Activated B cell treated with CpG ODN at 0.5 μM for 24 hours (primary cell): ENCODE measurements at regions of chr15 and their contacts with region 1.

Region 1: GRCh38 chr15:76336254-76337058 is at the start of gene ISL2:
- DNase-seq: peak; percentile 45
- ATAC-seq: peak; percentile 43
- H3K4me3 Mint-ChIP-seq: peak within 1 kb of the TSS; percentile 82
- H3K27ac Mint-ChIP-seq: peak within 1 kb of the TSS; percentile 60
- H3K4me1 Mint-ChIP-seq: peaks cover 57% of the 10 kb centered on the region
- H3K27me3 Mint-ChIP-seq: peaks cover 56% of the 10 kb centered on the region
- CTCF ChIP-seq: no peak
- total RNA-seq, gene ISL2: 0.35 and 0.39 TPM in 2 replicates

Region 2: DNA sequence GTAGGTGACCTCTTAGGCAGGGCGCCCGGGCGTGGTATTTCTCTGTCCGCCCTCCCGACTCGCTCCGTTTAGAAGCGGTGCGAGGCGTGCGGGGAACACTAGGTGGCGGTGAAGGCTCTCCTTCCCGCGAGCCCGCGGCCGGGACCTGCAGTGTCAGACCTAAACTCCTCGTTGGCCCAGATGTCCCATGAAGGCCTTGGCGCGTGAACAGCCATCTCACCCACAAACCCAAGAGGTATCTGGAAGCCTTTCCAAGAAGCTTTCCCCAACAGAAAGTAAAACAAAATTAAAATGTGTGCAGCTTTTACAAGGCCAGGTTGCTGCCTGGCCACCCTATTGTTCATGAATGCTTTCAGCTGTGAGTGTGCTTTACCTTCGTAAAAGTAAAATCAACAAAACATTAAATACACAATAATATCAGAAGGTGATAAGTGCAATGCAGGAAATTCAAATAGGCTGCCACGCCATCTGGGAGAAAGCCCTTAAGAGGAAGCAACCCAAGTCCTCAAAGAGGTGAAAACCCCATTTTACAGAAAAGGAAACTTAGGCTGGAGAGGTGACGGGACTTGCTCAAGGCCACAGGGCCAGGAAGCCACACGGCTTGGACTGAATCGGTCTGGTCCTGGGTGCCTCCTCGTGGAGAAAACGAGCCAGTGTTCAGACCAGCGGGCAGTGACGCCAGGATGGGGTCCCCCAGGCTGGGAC is 145.5 kb before region 1 on chr15:
- CTCF ChIA-PET with region 1: no interaction called
- POLR2A ChIA-PET with region 1: no interaction called
- intact Hi-C with region 1: loop called (anchors 2 kb)
- DNase-seq: peak; percentile 64
- ATAC-seq: peak; percentile 95
- H3K4me3 Mint-ChIP-seq: peak overlapping the region; percentile 75
- H3K27ac Mint-ChIP-seq: no peak overlapping the region
- H3K4me1 Mint-ChIP-seq: peaks cover 16% of the 10 kb centered on the region
- H3K27me3 Mint-ChIP-seq: peaks cover 31% of the 10 kb centered on the region
- CTCF ChIP-seq: peak; percentile 93

Region 3: GRCh38 chr15:76311100-76311953 is 25.1 kb before region 1 on chr15 and contains the start of gene ETFA:
- CTCF ChIA-PET with region 1: no interaction called
- POLR2A ChIA-PET with region 1: interaction called, 16 read pairs
- intact Hi-C with region 1: loop called (anchors 1 kb)
- DNase-seq: peak; percentile 90
- ATAC-seq: peak; percentile 97
- H3K4me3 Mint-ChIP-seq: peak within 1 kb of the TSS; percentile 89
- H3K27ac Mint-ChIP-seq: peak within 1 kb of the TSS; percentile 82
- H3K4me1 Mint-ChIP-seq: peaks cover 35% of the 10 kb centered on the region
- H3K27me3 Mint-ChIP-seq: no peaks in the 10 kb centered on the region
- CTCF ChIP-seq: no peak
- total RNA-seq, gene ETFA: 112 and 113 TPM in 2 replicates

Region 4: DNA sequence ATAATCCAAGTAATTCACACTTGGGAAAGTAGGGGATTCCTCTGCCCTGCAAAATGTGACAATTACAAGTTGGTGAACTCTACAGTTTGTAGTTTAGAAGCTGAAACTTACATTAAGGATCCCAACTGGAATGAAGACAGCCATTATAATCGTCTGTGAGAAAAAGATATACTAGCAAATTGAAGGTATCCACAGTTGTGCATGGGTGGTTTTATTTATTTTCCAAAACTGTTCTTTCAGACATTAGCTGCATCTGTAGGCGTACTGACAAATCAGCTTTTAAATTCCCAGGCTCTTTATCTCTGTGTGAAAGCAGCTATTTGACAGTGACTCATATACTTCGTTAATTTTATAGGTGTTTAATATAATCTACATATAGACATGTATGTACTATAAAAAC is 12.4 kb before region 1 on chr15:
- CTCF ChIA-PET with region 1: no interaction called
- POLR2A ChIA-PET with region 1: no interaction called
- intact Hi-C with region 1: no loop called
- DNase-seq: no peak
- ATAC-seq: no peak
- H3K4me3 Mint-ChIP-seq: no peak overlapping the region
- H3K27ac Mint-ChIP-seq: no peak overlapping the region
- H3K4me1 Mint-ChIP-seq: no peaks in the 10 kb centered on the region
- H3K27me3 Mint-ChIP-seq: peaks cover 35% of the 10 kb centered on the region
- CTCF ChIP-seq: no peak

Region 5: DNA sequence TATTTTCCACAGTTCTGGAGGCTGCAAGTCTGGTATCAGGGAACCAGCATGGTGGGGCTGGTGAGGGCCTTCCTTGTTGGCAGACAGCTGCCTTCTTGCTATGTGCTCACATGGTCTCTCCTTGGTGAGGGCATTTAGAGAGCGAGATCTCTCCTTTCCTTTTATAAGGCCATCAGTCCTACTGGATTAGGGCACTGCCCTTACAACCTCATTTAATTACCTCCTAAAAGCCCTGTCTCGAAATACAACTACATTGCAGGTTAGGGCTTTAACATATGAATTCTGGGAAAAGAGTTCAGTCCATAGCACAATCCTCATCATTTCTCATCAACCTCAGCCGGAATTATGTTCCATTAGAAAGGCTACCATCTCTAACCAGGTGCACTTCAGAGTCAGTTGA is 22.0 kb after region 1 on chr15:
- CTCF ChIA-PET with region 1: no interaction called
- POLR2A ChIA-PET with region 1: no interaction called
- intact Hi-C with region 1: no loop called
- DNase-seq: no peak
- ATAC-seq: no peak
- H3K4me3 Mint-ChIP-seq: no peak overlapping the region
- H3K27ac Mint-ChIP-seq: no peak overlapping the region
- H3K4me1 Mint-ChIP-seq: no peaks in the 10 kb centered on the region
- H3K27me3 Mint-ChIP-seq: no peaks in the 10 kb centered on the region
- CTCF ChIP-seq: no peak

Region 6: GRCh38 chr15:76625267-76625666 is 288.8 kb after region 1 on chr15:
- CTCF ChIA-PET with region 1: no interaction called
- POLR2A ChIA-PET with region 1: no interaction called
- intact Hi-C with region 1: no loop called
- DNase-seq: no peak
- ATAC-seq: no peak
- H3K4me3 Mint-ChIP-seq: no peak overlapping the region
- H3K27ac Mint-ChIP-seq: no peak overlapping the region
- H3K4me1 Mint-ChIP-seq: no peaks in the 10 kb centered on the region
- H3K27me3 Mint-ChIP-seq: no peaks in the 10 kb centered on the region
- CTCF ChIP-seq: no peak

Region 7: DNA sequence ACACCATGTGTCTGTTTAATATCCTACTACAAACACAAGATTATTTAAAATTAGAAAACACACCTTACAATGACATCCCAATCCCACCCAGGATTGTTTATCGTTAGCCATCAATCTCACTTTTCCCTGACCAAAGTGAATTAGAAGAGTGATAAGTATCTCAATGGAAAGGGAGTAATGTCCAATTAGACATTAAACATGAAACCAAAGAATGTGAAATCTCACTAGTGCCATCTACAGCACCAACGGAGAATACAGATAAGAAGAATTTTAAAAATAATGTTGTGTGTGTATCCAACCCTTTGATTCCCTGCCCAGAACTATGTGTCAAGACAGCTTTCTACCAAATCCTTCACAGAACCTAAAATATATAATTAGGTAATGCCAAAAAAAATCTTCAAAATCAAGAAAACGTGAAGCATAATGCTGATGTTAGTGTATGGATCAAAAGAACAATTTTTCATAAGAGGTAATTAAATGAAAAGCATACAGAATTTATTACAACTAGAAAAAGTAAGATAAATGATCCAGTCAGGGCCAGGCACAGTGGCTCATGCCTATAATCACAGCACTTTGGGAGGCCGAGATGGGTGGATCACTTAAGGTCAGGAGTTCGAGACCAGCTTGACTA is 504.5 kb after region 1 on chr15:
- CTCF ChIA-PET with region 1: no interaction called
- POLR2A ChIA-PET with region 1: no interaction called
- intact Hi-C with region 1: loop called (anchors 5 kb)
- DNase-seq: no peak
- ATAC-seq: no peak
- H3K4me3 Mint-ChIP-seq: no peak overlapping the region
- H3K27ac Mint-ChIP-seq: no peak overlapping the region
- H3K4me1 Mint-ChIP-seq: peaks cover 30% of the 10 kb centered on the region
- H3K27me3 Mint-ChIP-seq: no peaks in the 10 kb centered on the region
- CTCF ChIP-seq: no peak

Region 8: DNA sequence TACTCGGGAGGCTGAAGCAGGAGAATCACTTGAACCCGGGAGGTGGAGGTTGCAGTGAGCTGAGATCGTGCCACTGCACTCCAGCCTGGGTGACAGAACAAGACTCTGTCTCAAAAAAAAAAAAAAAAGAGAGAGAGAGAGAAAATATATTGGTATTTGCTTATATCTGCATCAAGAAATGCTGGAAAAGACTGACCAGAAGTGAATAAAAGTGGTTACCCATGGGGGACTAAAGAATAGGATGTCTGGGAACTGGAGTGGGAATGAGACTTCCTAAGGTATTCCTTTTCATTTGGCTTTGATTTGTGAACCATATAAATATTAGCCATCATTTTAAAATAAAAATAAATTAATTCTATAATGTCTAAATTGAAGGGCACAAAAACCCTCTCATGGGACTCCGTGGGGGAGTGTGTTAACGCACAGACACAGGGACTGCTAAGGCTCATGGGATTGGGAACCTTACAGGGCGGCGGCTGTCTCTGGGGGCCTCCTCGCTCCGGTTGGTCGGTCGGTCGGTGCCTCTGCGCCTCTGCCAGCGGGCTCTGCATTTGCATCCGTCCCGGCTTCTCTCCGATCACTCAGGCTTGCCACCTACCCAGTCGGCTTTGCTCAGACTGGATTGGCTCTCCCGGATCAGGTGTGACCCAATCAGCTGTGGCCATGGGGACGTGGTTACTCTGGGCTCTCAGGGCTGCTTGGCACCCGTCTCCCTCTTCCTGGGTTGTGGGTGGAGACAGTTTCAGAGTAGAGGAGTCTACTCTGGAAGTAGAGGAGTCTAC is 747.1 kb after region 1 on chr15:
- CTCF ChIA-PET with region 1: no interaction called
- POLR2A ChIA-PET with region 1: no interaction called
- intact Hi-C with region 1: loop called (anchors 10 kb)
- DNase-seq: peak; percentile 74
- ATAC-seq: peak; percentile 97
- H3K4me3 Mint-ChIP-seq: peak overlapping the region; percentile 63
- H3K27ac Mint-ChIP-seq: peak overlapping the region; percentile 89
- H3K4me1 Mint-ChIP-seq: peaks cover 57% of the 10 kb centered on the region
- H3K27me3 Mint-ChIP-seq: no peaks in the 10 kb centered on the region
- CTCF ChIP-seq: no peak